ENCODE measurements at regions of chr20 and their contacts with region 1.

Region 1: DNA sequence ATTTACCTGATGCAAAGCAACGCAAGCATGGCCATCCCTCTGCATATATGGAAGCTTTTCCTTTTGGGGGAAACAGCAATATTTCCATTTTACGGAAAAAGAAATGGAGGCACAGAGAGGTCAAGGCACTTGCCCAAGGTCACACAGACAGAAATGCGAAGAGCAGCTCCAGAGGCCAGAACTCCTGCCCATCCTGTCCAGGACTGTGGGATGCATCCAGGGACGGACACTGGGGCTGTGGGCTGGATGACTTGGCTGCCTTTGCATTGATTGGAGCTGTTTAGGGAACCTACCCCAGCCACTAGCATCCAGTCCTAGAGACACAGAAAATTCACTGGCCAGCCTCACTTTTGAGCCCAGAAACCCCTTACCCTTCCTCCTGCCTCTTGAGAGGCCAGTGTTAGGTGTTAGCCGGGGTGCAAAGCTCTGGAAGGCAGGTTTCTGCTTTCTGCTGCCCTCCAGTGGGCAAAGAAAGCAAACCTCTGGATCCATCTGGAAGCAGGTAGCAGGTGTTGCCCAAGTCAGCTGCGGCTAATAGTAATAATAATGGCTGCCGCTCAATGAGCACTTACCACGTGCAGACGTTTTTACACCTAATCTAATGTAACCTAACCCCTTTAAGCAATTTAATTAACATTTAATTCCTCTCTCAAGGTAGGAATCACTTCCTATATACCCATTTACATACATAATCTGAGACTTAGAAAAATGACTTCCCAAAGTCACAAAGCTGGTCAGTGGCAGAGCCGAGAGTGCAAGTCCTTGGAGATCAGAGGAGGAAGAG is 31.7 kb upstream of the CCN5 start:
- DNase-seq: peak in 12 of 14 experiments; percentile 20 to 81 (median 52)
- ATAC-seq: peak; percentile 76
- H3K4me3 ChIP-seq: no peak overlapping the region
- H3K4me3 Mint-ChIP-seq: no peak overlapping the region
- H3K27ac ChIP-seq: no peak overlapping the region
- H3K27ac Mint-ChIP-seq: no peak overlapping the region
- H3K4me1 ChIP-seq: peaks cover 5% of the 10 kb centered on the region
- H3K4me1 Mint-ChIP-seq: peaks cover 15% of the 10 kb centered on the region
- H3K27me3 ChIP-seq: no peaks in the 10 kb centered on the region
- H3K27me3 Mint-ChIP-seq: no peaks in the 10 kb centered on the region
- CTCF ChIP-seq: peak; percentile 58

Region 2: DNA sequence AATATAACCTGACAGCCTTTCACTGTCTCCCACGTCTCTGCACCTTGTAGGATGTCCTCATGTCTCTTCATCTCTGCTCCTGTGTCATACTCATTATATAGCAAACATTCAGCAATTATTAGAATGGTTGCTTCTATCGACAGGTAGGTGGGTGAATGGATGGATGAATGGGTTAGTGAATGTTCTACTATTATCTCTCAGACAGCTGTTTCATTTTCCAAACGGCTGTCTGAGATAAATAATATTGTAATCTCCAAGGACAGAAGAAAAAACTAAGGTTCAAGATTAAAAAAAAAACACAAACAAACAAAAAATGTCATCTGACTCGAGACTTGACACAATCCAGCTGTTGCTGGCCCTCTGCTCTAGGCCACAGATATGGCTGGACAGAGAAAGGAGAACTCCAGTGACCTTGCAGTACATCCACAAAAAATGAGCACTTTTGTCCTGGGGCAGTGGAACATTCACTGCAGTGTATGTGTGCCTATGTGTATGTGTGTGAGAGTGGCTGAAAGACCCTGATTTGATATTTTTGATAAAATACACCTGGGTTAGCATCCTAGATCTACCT is 325.8 kb before region 1 on chr20:
- CTCF ChIA-PET with region 1: no interaction called
- POLR2A ChIA-PET with region 1: no interaction called
- intact Hi-C with region 1: no loop called
- DNase-seq: no peak
- ATAC-seq: no peak
- H3K4me3 ChIP-seq: no peak overlapping the region
- H3K4me3 Mint-ChIP-seq: no peak overlapping the region
- H3K27ac ChIP-seq: no peak overlapping the region
- H3K27ac Mint-ChIP-seq: no peak overlapping the region
- H3K4me1 ChIP-seq: no peaks in the 10 kb centered on the region
- H3K4me1 Mint-ChIP-seq: no peaks in the 10 kb centered on the region
- H3K27me3 ChIP-seq: peaks cover 0 to 4% of the 10 kb centered on the region in 2 experiments
- H3K27me3 Mint-ChIP-seq: peaks cover 27% of the 10 kb centered on the region
- CTCF ChIP-seq: no peak

Region 3: DNA sequence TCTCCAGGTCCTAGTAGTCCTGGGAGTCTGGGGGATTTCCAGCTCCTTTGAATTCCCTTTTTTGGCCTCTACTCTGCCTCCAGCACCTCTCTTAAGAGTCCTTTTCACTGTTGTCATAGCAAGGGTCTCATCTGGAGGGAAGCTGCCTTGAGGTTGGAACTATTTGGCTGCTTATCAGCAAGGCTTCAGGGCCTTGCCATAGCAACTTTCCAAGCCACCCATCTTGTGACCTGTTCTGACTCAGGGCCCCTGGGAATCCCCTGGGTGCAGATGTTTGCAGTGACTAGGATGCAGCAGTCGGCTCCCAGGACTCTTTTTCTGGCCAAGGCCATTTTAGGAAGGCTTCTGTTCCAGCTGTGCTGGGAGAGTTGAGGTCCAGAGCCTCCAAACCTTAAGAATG is 88.7 kb before region 1 on chr20:
- CTCF ChIA-PET with region 1: no interaction called
- POLR2A ChIA-PET with region 1: no interaction called
- intact Hi-C with region 1: no loop called
- DNase-seq: peak in 1 of 14 experiments; percentile 47
- ATAC-seq: no peak
- H3K4me3 ChIP-seq: no peak overlapping the region
- H3K4me3 Mint-ChIP-seq: no peak overlapping the region
- H3K27ac ChIP-seq: no peak overlapping the region
- H3K27ac Mint-ChIP-seq: no peak overlapping the region
- H3K4me1 ChIP-seq: peaks cover 13% of the 10 kb centered on the region
- H3K4me1 Mint-ChIP-seq: peaks cover 14% of the 10 kb centered on the region
- H3K27me3 ChIP-seq: no peaks in the 10 kb centered on the region
- H3K27me3 Mint-ChIP-seq: no peaks in the 10 kb centered on the region
- CTCF ChIP-seq: no peak

Region 4: GRCh38 chr20:44609511-44610312 is 73.7 kb before region 1 on chr20:
- CTCF ChIA-PET with region 1: interaction called, 14 read pairs
- POLR2A ChIA-PET with region 1: interaction called, 6 read pairs
- intact Hi-C with region 1: no loop called
- DNase-seq: peak; percentile 68 to 90 (median 80)
- ATAC-seq: peak; percentile 81
- H3K4me3 ChIP-seq: no peak overlapping the region
- H3K4me3 Mint-ChIP-seq: peak overlapping the region; percentile 83
- H3K27ac ChIP-seq: peak overlapping the region; percentile 35 to 86
- H3K27ac Mint-ChIP-seq: peak overlapping the region; percentile 98
- H3K4me1 ChIP-seq: peaks cover 28% of the 10 kb centered on the region
- H3K4me1 Mint-ChIP-seq: peaks cover 40% of the 10 kb centered on the region
- H3K27me3 ChIP-seq: no peaks in the 10 kb centered on the region
- H3K27me3 Mint-ChIP-seq: no peaks in the 10 kb centered on the region
- CTCF ChIP-seq: peak; percentile 93

Region 5: DNA sequence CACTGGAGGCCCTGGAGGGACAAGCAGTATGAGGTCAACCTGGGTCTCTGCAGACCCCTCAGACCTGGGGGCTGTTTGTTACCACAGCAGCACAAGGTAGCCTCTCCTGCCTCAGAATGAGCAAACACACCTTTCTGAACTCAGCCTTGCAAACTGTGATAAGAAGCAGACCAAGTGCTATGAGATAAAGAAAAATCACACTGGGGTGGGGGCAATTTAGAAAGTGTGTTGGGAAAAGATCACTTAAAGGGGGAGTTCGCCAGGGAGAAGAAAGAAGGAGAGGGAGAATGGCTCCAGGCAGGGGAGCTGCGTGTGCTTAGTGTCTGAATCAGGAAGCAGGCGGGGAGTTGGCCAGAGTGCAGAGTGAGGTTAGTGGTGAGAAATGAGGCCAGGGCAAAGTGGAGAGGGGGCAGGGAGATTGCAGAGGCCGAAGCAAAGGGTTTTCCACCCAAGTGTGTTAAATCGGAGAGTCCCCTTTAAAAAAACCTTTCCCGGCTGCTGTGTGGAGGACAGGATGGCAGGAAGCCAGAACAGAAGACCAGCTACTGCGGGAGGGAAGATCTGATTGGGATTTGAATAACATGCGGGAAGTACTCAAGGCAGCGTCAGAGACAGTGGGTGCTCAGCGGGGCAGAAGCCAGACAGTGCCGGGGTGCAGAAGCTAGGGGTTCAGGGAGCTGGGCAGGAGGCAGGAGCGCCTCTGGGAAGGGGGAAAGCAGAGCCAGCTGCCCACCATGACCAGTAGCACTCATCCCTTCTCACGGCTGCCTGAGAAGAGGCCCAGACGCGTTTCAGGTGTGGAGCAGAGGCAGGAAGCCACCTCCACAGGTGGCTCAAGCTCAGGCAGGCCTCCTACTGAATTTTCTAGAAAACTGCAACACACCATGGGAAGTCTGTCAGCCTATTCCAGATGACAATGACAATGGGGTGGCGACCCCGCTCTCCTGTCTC is 41.0 kb before region 1 on chr20:
- CTCF ChIA-PET with region 1: interaction called, 21 read pairs
- POLR2A ChIA-PET with region 1: interaction called, 9 read pairs
- intact Hi-C with region 1: loop called in 1 of 2 experiments (anchors 5 kb)
- DNase-seq: peak in 7 of 14 experiments; percentile 18 to 67 (median 48)
- ATAC-seq: peak; percentile 33
- H3K4me3 ChIP-seq: peak overlapping the region; percentile 21
- H3K4me3 Mint-ChIP-seq: peak overlapping the region; percentile 47
- H3K27ac ChIP-seq: peak overlapping the region; percentile 81 to 90
- H3K27ac Mint-ChIP-seq: peak overlapping the region; percentile 91
- H3K4me1 ChIP-seq: peaks cover 69% of the 10 kb centered on the region
- H3K4me1 Mint-ChIP-seq: peaks cover 75% of the 10 kb centered on the region
- H3K27me3 ChIP-seq: no peaks in the 10 kb centered on the region
- H3K27me3 Mint-ChIP-seq: no peaks in the 10 kb centered on the region
- CTCF ChIP-seq: peak; percentile 36

Region 6: GRCh38 chr20:44733341-44734069 is 50.0 kb after region 1 on chr20:
- CTCF ChIA-PET with region 1: interaction called, 7 read pairs
- POLR2A ChIA-PET with region 1: no interaction called
- intact Hi-C with region 1: loop called (anchors 1 kb)
- DNase-seq: peak; percentile 38 to 81 (median 50)
- ATAC-seq: peak; percentile 74
- H3K4me3 ChIP-seq: no peak overlapping the region
- H3K4me3 Mint-ChIP-seq: no peak overlapping the region
- H3K27ac ChIP-seq: no peak overlapping the region
- H3K27ac Mint-ChIP-seq: no peak overlapping the region
- H3K4me1 ChIP-seq: peaks cover 14% of the 10 kb centered on the region
- H3K4me1 Mint-ChIP-seq: peaks cover 11% of the 10 kb centered on the region
- H3K27me3 ChIP-seq: no peaks in the 10 kb centered on the region
- H3K27me3 Mint-ChIP-seq: no peaks in the 10 kb centered on the region
- CTCF ChIP-seq: peak; percentile 65

Region 7: DNA sequence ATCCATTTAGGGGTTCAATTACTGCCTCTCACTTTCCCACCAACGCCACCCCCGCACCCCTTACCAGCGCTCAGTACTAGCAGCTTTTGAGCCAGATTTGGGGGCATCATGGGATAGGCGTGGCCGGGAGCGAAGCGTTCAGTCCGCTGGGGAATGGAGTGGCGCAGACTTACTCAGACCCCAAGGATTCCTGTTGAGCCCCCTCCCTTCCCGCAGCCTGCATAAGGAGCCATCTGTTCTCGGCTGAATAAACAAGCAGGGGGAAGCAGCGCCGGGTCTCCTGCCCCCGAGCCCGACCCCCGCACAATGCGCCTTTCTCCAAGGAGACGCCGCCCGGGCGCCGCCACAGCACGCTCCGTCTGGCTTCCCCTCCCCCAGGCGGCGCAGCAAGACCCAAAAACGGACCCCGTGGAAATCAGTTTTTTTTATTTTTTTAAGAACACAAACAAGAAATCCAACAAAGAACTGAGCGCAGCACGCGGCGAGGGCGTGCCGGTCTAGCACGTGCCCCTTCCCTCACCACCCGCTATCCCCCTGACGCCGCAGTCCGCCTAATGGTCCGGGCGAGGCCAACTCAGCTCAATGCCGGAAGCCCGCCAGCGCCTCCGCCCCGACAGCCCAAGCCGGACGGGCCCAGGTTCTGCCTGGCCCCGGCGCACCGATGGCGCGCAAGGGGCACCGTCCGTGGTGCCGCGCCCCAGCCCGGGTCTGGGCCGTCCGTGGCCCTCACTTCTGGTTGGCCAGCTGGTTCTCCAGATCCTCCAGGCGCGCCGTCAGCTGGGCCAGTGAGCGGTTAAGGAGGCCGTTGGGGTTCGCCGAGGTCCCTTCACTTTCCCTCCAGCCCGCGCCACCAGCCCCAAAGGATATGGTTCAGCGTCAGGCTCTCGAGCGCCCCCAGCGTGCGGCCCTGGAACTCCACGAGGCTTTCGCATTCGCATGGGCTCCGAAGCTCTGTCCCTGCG is 609.9 kb after region 1 on chr20:
- CTCF ChIA-PET with region 1: interaction called, 4 read pairs
- POLR2A ChIA-PET with region 1: no interaction called
- intact Hi-C with region 1: loop called in 1 of 2 experiments (anchors 5 kb)
- DNase-seq: peak; percentile 63 to 84 (median 74)
- ATAC-seq: peak; percentile 92
- H3K4me3 ChIP-seq: peak overlapping the region; percentile 40
- H3K4me3 Mint-ChIP-seq: peak overlapping the region; percentile 82
- H3K27ac ChIP-seq: no peak overlapping the region
- H3K27ac Mint-ChIP-seq: no peak overlapping the region
- H3K4me1 ChIP-seq: peaks cover 17% of the 10 kb centered on the region
- H3K4me1 Mint-ChIP-seq: no peaks in the 10 kb centered on the region
- H3K27me3 ChIP-seq: peaks cover 15 to 23% of the 10 kb centered on the region in 2 experiments
- H3K27me3 Mint-ChIP-seq: peaks cover 66% of the 10 kb centered on the region
- CTCF ChIP-seq: peak; percentile 95

Measured in CD4-positive, alpha-beta T cell (primary cell).